PC-3 (cell line): ENCODE measurements at regions of chr3 and their contacts with region 1.

Region 1: DNA sequence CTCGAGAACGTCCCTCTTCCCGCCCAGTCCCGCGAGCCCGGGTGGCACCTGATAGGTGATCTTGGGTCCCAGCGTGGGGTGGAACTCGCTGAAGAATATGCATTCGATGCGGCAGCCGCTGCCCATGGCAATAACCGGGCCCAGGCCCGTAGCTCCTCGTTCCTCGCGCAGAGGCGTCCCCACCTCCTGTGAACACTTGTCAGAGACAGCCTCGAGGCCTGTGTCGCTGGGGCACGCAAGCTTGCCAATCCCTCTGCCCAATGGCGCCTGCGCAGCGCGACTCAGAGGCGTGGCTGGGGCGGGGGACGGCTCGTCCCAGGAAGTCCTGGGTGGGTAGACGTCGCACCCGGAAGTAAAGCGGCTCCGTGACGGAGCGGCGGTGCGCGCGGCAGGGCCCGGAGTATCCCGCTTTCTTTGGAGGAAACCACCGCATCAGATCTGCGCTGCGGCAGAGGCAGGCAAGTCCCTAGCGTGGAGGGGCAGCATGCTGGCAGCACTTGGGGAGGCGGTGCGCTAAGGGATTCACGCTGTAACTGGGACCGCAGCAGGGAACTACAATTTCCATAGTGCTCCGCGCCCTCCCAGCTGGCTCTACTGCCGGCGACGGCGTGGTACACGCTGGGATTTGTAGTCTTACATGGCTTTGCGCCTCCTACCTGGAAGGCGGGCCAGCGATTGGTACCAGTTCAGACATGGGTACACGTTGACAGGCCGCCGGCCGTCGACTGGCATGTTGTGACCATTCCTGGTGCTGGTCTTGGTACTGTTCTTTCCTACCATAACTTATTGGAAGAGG is at the starts of genes CYB561D2 and NPRL2:
- DNase-seq: peak; percentile 97
- ATAC-seq: peak; percentile 88
- H3K4me3 ChIP-seq: peak within 1 kb of the TSS; percentile 84
- H3K27ac ChIP-seq: peak within 1 kb of the TSS; percentile 70
- H3K4me1 ChIP-seq: peaks cover 43% of the 10 kb centered on the region
- H3K27me3 ChIP-seq: no peaks in the 10 kb centered on the region
- CTCF ChIP-seq: no peak
- total RNA-seq, gene CYB561D2: 37.1 and 44.3 TPM in 2 replicates
- total RNA-seq, gene NPRL2: 40.9 and 56.9 TPM in 2 replicates

Region 2: DNA sequence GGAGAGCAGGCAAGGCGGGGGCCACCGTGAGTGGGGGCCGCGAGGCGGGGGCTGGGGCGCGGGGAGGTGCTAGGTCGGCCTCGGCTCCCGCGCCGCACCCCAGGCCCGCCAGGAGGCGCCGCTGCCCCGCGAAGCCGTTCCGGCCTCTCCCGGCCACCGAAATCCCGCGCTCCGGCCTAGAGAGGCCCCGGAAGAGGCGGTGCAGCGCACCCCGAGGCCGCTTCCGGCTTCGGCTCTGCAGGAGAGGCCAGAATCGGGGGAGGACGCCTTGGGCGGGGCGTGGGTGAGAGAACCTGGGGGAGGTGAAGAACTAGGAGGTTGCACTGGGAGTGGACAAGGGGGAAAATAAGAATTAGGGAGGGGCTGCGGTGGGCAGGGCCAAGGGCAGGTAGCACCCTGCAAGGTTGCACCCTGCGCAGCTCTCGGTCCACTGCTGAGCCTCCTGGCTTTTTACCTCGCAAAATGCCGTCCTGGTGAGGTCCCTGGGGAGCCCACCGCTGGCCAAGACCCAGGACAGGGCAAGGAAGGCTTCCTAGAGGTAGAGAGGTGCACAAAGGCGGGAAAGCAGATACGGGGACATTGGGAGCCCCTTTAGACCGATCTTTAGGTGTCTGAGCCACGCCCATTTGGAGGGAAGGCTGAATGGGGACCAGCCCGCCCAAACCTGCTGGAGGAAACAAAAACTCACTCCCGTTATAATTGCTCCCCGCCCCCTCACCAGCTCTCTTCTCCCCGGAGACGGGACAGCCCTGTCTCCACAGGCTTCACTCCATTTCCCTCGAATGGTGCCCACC is 123.1 kb before region 1 on chr3:
- CTCF ChIA-PET with region 1: interaction called, 22 read pairs
- POLR2A ChIA-PET with region 1: no interaction called
- intact Hi-C with region 1: no loop called
- DNase-seq: peak; percentile 98
- ATAC-seq: peak; percentile 85
- H3K4me3 ChIP-seq: peak overlapping the region; percentile 74
- H3K27ac ChIP-seq: peak overlapping the region; percentile 57
- H3K4me1 ChIP-seq: peaks cover 10% of the 10 kb centered on the region; the same call in 1 of the 2 replicates
- H3K27me3 ChIP-seq: no peaks in the 10 kb centered on the region
- CTCF ChIP-seq: peak; percentile 77

Region 3: DNA sequence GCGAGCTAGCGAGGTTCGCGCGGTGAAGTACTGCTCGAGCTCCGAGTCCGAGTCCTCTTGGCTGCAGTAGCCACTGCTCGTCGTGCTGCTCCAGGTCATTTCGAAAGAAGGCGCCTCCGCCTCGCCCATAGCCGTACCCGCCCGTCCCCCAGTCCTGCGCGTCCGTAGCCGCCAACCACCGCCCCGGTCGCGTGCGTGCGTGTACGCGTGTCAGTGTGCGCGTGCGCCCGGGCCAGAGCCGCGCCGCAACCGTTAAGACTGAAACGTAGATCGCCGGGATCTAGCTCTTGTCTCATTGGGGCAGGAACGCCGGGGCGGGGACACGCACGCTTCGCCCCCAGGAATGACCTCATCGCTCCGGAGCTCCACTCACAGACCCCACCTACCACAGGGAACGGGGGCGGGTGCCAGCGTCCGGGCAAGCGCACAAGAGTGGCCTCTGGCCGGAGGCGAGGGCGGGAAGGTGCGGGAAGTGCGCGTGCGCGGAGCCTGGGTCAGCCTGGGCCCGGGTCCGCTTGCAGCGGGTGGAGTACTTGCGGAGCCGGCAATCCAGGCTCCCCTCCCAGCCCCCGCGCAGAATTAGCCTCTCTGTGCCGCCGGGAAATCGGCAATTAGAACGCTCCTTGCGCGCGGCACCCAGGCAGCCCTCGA is 13.4 kb before region 1 on chr3:
- CTCF ChIA-PET with region 1: interaction called, 9 read pairs
- POLR2A ChIA-PET with region 1: interaction called, 17 read pairs
- intact Hi-C with region 1: no loop called
- DNase-seq: peak; percentile 99
- ATAC-seq: peak; percentile 88
- H3K4me3 ChIP-seq: peak overlapping the region; percentile 89
- H3K27ac ChIP-seq: peak overlapping the region; percentile 72
- H3K4me1 ChIP-seq: peaks cover 32% of the 10 kb centered on the region
- H3K27me3 ChIP-seq: no peaks in the 10 kb centered on the region
- CTCF ChIP-seq: no peak

Region 4: GRCh38 chr3:50542177-50543034 is 191.7 kb after region 1 on chr3:
- CTCF ChIA-PET with region 1: interaction called, 9 read pairs
- POLR2A ChIA-PET with region 1: no interaction called
- intact Hi-C with region 1: loop called (anchors 1 kb)
- DNase-seq: peak; percentile 88
- ATAC-seq: peak; percentile 92
- H3K4me3 ChIP-seq: no peak overlapping the region
- H3K27ac ChIP-seq: no peak overlapping the region
- H3K4me1 ChIP-seq: no peaks in the 10 kb centered on the region
- H3K27me3 ChIP-seq: peaks cover 14% of the 10 kb centered on the region
- CTCF ChIP-seq: peak; percentile 95